Activated naive CD4-positive, alpha-beta T cell treated with anti-CD3 and anti-CD28 coated beads for 36 hours (primary cell): ENCODE measurements at regions of chr5 and their contacts with region 1.

Region 1: GRCh38 chr5:119022017-119022745 is 33.8 kb upstream of the DTWD2 start:
- DNase-seq: no peak
- H3K4me3 Mint-ChIP-seq: no peak overlapping the region
- H3K27ac Mint-ChIP-seq: no peak overlapping the region
- H3K4me1 Mint-ChIP-seq: peaks cover 5% of the 10 kb centered on the region
- H3K27me3 Mint-ChIP-seq: no peaks in the 10 kb centered on the region

Region 2: DNA sequence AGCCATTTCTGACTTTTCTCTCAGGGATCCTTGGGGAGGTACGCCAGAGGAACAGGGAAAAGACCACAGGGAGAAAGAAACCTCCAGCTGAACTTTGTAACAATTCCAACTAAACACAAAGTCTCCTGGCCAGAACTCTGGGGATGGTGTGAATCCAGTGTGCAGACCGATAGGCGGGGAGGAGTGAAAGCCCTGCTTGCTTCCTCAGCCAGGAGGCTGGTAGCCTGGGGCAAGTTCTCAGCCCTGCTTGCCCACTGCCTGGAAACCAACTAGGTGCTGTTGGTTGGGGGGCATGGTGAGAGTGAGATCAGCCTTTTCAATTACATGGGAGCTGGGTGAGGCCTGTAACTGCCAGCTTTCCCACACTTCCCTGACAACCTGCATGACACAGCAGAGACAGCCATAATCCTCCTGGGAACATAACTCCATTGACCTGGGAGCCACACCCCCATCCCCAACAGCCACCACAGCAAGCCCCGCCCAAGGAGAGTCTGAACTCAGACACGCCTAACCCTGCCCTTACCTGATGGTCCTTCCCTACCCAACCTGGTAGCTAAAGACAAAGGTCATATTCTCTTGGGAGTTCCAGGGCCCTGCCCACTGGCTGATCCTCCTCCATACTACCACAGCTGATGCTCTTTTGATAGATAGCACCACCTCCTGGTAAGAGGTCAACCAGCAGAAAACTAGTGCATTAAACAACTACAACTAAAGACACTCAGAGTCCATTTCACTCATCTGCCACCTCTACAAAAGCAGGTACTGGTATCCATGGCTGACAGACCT is 233.6 kb after region 1 on chr5:
- CTCF ChIA-PET with region 1: interaction called, 3 read pairs
- intact Hi-C with region 1: loop called (anchors 1 kb)
- DNase-seq: peak; percentile 32
- H3K4me3 Mint-ChIP-seq: no peak overlapping the region
- H3K27ac Mint-ChIP-seq: no peak overlapping the region
- H3K4me1 Mint-ChIP-seq: peaks cover 21% of the 10 kb centered on the region
- H3K27me3 Mint-ChIP-seq: no peaks in the 10 kb centered on the region

Region 3: DNA sequence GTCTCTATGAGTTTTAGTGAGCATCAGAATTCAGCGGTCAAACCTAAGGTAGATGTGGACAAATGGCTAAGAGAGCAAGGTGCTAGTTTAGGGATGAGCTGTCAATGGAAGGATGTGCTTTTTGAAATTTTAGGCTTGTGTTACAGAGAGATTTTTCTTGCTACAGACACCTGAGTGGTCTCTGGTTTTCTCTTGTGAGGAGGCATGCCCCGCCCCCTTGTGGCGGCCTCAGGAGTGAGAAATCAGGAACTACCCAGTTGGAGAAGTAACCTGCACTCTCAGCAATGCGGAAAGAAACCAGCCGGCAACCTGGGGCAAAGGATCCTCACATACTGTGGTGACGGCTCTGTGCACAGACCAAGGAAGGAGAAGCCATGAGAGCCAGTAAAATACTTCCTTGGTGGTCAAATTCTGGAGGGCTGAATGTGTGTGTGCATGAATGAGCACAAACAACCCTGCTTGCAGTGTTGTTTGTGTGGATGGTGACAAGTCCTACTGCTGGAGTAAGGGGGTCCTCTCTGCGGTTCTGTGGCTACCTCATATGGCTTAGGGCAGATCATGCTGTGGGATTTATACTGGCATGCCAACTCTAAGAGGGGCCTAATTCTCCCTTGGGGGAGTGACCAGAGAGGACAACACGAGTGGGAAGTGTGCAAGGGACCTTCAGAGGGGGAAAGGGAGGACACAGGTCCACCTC is 413.4 kb after region 1 on chr5:
- CTCF ChIA-PET with region 1: interaction called, 7 read pairs
- intact Hi-C with region 1: loop called (anchors 1 kb)
- DNase-seq: peak; percentile 85
- H3K4me3 Mint-ChIP-seq: no peak overlapping the region
- H3K27ac Mint-ChIP-seq: no peak overlapping the region
- H3K4me1 Mint-ChIP-seq: peaks cover 8% of the 10 kb centered on the region
- H3K27me3 Mint-ChIP-seq: peaks cover 7% of the 10 kb centered on the region

Region 4: DNA sequence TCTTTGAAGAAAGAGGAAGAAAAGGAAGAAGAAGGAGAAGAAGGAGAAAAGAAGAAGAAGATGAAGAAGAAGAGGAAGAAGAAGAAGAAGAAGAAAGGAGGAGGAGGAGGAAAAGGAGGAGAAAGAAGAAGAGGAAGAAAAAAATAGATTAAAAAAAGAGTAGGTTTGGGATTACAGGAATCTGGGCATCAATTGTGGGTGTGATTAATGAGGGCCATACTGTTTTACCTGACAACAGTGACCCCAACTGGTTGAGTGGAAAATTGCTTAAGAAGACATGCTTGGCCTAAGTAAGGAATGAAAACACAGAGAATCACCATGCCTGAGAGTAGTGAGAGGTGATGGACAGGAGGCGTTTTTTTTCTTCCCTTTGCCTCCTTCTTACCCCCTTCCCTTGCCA is 721.7 kb after region 1 on chr5:
- CTCF ChIA-PET with region 1: no interaction called
- intact Hi-C with region 1: loop called (anchors 2 kb)
- DNase-seq: peak; percentile 22
- H3K4me3 Mint-ChIP-seq: no peak overlapping the region
- H3K27ac Mint-ChIP-seq: no peak overlapping the region
- H3K4me1 Mint-ChIP-seq: no peaks in the 10 kb centered on the region
- H3K27me3 Mint-ChIP-seq: peaks cover 3% of the 10 kb centered on the region